ENCODE measurements at regions of chr2 and their contacts with region 1.

Region 1: GRCh38 chr2:74867841-74868658 is 34.1 kb downstream of the HK2 start:
- DNase-seq: no peak

Region 2: DNA sequence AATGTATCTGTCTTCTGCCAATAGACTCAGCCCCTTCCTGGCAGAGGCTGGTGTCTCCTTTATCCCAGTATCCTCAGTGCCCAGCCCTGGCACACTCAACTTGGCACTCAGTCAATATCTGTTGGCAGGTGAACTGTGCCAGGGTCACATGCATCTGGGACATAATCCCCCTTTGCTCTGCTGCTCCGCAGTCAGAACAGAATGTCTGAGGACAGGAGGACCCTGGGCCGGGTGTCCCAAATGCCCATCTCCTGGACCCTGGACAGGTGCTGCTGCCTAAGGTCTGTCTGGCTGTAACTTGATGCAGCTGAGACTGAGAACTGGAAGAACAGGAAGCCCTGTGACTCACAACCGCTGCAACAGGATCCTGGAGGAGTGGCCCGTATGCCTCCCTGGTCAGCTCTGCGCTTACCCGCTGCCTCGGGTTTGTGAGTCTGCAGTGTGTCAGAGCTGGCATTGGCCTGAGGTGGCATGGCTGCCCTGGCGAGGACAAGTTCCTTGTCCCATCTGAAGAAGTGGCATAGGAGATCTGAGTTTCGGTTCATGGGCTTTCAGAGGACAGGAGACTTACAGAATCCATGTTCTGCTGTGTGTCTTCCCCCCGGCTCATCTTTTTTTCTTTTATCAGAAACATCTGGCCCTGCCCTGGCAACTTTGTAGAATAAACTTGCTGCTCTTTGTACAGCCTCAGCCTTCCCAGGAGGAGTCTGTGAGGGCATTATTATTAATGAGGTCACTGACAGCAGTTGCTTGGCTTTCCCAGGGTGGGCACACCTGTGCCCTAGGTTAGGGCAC is 22.6 kb before region 1 on chr2:
- intact Hi-C with region 1: loop called (anchors 2 kb)
- DNase-seq: peak; percentile 94

Region 3: DNA sequence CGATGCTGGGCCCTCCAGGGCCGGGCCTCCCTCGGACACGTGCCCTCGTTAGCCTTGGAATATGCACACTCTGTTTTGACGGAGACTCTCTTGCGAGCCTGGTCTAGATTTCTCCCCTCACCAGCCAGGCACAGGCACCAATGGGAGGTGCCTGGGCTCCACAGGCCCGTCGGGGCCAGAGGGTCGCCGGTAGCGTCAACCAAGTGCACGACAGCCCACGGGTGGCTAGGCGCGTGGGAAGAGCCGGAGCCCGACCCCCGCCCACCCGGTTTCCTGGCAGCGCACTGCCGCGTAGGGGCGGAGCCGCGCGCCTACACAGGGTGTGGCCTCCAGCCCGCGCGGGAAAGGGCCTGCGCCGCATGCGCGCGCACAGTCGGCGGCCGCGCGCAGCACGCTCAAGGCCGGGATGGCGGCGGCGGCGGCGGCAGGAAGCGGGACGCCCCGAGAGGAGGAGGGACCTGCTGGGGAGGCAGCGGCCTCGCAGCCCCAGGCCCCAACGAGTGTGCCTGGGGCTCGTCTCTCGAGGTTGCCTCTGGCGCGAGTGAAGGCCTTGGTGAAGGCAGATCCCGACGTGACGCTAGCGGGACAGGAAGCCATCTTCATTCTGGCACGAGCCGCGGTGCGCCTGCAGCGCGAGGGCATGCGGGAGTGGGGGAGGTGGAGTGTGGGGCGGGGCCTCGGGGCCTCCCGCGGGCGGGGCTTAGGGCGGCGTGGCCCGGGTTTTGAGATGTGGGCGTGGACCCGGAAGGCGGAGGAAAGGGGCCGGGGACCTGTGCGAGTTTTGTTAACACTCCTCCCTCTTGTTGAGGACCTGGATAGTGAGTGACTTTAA is 90.4 kb after region 1 on chr2 and contains the start of gene POLE4:
- intact Hi-C with region 1: no loop called
- DNase-seq: peak; percentile 96
- total RNA-seq, gene POLE4: 27.0 TPM